ENCODE measurements at regions of chr11 and their contacts with region 1.

Region 1: DNA sequence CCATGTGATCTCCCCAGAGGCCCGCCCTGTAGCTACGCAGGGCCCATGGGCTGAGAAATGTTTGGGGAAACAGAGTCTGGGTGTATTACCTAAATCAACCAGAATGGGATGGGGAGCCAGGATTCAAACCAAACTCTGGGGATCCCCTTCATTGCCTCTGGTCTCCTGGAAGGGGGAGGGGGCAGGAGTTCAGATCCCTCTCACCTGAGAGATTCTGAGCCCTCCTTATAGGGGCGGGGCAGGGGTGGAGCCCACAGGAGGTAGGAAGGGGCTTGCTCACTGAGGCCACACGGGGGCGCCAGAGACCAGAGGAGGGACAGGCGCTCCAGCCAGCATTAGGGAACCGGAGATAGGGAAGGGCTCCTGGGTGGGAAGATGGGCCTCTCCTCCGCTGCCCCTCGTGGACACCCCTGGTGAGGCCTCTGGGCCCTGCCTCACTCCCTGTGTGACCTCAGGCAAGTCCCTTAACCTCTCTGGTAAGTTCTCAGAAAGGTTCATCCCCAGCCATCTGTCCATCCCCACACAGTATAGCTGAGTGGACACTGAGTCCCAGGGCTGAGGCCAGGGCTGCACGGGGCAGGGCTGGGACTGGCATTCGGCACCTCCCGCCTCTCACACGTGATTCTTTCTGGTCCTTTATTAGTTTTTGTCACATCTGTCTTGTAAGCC is 2.7 kb upstream of the CDC42BPG start:
- DNase-seq: peak; percentile 93
- ATAC-seq: peak; percentile 83 to 88

Region 2: DNA sequence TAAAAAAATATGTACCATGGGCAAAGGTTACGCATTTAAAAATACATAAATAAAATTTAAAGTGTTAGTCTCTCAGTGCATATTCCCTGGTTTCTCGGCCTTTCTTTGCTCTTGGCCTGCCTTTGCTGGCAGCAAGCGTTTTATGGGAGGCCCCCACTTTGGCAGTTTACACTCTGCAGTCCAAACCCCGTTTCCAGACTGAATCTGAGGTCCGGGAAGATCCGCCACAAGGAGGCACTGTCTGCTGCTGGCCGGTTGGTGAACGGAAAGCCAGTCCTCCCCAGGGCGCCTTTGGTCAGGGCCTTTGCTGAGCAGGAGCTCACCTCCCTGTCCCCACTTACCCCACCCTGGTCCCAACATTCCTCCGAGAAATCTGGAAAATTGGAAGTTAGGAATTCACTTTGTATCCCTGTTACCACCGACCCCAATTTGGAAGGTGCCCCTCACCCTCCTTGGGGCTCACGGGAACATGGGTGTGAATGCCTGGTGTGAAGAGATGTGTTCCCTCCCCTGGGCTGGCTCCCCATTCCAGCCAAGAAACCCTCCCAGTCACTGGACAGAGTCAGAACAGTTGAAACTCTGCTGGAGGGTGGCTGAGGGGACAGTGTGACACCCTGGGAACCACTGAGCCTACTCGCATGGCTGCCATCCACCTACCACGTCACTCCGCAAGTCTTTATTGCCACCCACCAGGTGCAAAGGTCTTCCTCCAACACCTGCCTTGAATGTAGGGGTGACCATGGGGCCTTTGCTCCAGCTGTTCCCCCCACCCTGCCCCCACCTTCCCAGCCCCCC is 59.4 kb before region 1 on chr11:
- intact Hi-C with region 1: loop called in 1 of 2 experiments (anchors 10 kb)
- DNase-seq: peak; percentile 72
- ATAC-seq: peak; percentile 56 to 63

Region 3: DNA sequence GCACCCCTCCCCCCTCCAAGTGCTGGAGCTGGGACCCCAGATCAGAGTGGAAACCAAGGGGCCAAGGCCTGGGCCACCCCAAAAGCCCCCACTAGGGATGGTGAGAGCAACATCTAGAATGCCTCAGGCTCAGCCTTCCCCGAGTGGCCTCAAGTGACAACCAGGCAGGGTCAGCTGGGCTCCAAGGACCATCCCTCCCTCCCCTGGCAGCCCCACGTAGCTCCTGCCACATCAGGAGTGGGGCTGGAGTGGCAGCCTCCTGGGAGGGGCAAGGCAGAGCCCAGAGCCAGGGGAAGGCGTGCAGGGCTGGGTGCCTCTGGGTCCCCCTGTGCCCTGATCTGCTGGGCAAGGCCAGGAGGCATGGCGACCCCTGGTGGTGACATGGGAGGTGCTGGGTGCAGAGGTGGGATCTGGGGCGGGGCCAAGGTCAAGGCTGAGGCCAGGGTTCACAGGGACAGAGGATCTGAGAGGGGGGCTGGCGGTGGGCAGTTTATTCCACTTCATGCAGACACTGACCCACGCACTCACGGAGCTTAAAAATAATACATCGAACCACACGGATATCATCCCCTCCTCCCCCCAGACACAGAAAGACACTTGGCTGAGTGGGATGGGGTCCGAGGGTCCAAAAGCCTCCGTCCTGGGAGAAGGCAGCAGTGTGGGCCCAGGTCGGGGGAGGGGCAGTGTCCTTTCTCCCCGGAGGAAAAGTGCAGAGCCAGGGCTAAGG is 47.1 kb after region 1 on chr11:
- intact Hi-C with region 1: loop called (anchors 1 to 2 kb)
- DNase-seq: peak; percentile 92
- ATAC-seq: peak; percentile 83 to 90

Region 4: GRCh38 chr11:65016697-65017096 is 169.6 kb after region 1 on chr11:
- intact Hi-C with region 1: no loop called
- DNase-seq: no peak
- ATAC-seq: no peak

Measured in left cardiac atrium (tissue), 4 donors.